ENCODE measurements at regions of chr20 and their contacts with region 1.

Region 1: GRCh38 chr20:42229636-42230035 is 611.5 kb upstream of the CHD6 start:
- DNase-seq: no peak

Region 2: DNA sequence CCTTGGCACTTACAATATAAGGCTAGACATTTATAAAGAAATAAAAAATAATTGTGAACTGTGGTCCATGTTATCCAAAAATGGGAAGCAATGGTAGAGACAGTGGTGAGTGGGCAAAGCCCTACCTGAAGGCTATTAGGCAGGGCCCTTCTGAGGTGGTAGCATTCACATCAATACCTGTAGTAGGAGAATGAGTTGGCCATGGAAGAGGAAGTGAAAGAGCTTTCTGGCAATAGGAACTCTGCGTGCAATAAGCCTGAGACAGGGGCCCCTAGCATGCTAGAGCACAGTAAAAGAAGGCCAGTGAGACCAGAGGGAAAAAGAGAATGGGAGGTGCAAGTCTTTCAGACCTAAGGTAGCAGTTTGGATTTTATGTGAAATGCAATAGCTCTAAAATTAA is 205.6 kb after region 1 on chr20:
- intact Hi-C with region 1: loop called in 1 of 2 experiments (anchors 5 kb)
- DNase-seq: no peak

Measured in posterior vena cava (tissue), 2 donors.